A549 (cell line): ENCODE measurements at regions of chr12 and their contacts with region 1.

Region 1: DNA sequence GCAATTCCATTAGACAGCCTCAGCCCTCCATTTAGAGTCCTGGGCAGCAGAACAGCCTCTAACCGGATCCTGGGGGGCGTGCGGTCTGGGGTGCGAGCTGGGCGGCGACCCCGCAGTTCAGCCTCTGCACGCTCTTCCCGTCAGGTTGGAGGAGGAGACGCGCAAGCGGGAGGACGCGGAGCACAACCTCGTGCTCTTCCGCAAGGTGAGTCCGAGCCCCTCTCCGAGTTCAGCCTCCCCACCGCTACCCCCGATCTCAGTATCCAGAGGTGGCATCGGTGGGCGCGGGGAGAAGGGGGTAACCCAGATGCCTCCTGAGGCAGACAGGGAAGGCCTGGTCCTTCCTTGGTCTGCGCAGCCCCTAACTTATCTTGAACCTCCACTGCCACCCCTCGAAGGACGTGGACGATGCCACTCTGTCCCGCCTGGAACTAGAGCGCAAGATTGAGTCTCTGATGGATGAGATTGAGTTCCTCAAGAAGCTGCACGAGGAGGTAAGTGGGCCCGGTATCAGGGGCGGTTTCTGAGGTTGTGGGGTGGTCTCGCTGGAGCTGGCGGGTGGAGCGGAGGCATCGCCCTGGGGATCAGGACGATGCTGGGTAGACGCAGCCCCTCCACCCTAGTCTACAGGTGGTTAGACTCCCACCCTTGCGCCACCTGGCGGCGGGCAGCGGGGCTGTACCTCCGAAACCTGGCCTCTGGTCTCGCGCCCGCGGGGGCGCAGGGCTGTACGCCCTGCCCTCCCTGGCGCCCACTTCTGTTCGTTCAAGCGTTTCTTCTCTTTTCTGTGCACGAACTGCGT is 1.3 kb downstream of the PRPH start:
- DNase-seq: peak; percentile 69 to 88
- ATAC-seq: peak; percentile 60 to 83
- H3K4me3 ChIP-seq: peak overlapping the region; percentile 52
- H3K27ac ChIP-seq: peak overlapping the region; percentile 50 to 80; a peak in 5 of 6 replicates
- H3K4me1 ChIP-seq: peaks cover 18% of the 10 kb centered on the region; the same call in 2 of the 3 replicates
- CTCF ChIP-seq: peak; percentile 81
- EP300 ChIP-seq: no peak
- POLR2A ChIP-seq: no peak
- RAD21 ChIP-seq: peak in 1 of 2 experiments; percentile 34; a peak in 2 of 5 replicates

Region 2: DNA sequence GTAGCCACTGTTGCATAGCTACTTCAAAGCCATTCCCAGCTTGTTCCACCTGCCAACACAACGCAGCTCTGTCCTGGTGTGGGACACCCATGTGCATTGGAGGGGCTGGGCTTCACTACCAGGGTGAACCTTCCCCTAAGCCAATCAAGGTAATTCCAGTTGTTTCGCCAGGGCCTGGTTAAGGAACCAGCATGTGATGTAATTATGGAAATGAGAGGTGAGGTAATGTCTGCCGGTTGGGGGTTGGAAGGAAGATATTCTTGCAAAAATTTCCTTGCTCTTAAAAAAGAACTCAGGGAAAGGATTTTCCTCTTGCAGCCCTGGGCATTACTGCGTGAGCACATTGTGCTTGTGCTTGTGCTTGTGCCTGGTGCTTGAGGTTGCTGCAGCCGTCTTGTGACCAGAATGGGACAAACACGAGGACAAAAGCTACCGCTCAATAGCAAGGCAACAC is 16.5 kb before region 1 on chr12:
- CTCF ChIA-PET with region 1: interaction called, 120 read pairs
- POLR2A ChIA-PET with region 1: no interaction called
- DNase-seq: no peak
- ATAC-seq: no peak
- H3K4me3 ChIP-seq: no peak overlapping the region
- H3K27ac ChIP-seq: no peak overlapping the region
- H3K4me1 ChIP-seq: 0 out of 3 replicates have a peak, but pooled peaks cover 9% of the 10 kb centered on the region
- CTCF ChIP-seq: no peak
- EP300 ChIP-seq: no peak
- POLR2A ChIP-seq: no peak
- RAD21 ChIP-seq: no peak

Region 3: GRCh38 chr12:49309391-49309790 is 13.2 kb after region 1 on chr12:
- CTCF ChIA-PET with region 1: interaction called, 21 read pairs
- POLR2A ChIA-PET with region 1: no interaction called
- DNase-seq: peak in 1 of 2 experiments; percentile 25
- ATAC-seq: peak in 1 of 2 experiments; percentile 59; a peak in 3 of 6 replicates
- H3K4me3 ChIP-seq: no peak overlapping the region
- H3K27ac ChIP-seq: no peak overlapping the region
- H3K4me1 ChIP-seq: 0 out of 3 replicates have a peak, but pooled peaks cover 3% of the 10 kb centered on the region
- CTCF ChIP-seq: no peak
- EP300 ChIP-seq: no peak
- POLR2A ChIP-seq: no peak
- RAD21 ChIP-seq: no peak

Region 4: DNA sequence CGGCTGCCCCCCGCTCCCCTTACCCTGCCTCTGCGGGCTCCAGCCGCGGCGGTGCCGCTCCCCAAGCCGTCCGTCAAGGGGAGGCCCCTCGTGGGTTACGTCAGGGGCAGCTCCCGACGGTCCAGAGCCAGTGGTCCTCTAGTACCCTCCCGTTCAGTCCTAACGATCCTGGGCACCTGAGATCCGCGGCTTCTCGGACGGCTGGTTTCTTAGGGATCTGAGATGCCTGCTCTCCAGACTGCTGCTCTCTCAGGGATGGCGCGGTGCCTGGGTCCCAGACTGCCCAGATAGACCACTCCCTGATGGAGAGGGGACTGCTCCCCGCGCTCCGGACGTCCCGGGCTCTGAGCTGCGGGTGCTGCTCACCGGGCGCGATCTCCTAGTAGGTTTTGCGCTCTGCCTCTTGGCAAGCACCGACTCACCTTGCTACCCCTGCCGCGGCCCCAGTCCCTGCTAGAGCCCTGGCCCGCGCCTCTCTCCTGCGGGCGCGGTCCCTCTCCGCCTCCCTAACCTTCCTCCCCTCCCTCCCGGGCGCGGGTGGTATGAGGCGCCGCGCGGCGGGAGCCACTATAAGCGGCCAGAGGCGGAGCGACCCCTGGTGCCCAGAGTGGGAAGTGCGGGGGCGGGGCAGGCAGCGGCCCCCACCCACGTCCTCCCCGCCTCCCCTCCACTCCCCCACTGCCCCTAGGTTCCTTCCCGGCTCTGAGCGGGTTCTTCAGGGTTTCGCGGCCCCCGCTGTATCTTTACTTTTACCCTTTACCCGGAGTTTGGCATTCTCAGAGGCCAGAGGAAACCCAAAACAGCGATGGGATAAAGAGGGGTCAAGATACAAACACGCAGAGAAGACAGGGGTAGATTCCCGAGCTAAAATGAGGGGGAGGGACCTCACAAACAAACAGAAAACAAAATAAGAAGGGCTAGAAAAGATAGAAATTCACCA is 40.7 kb after region 1 on chr12 and contains the start of gene C1QL4:
- CTCF ChIA-PET with region 1: interaction called, 164 read pairs
- POLR2A ChIA-PET with region 1: no interaction called
- DNase-seq: peak; percentile 75 to 84
- ATAC-seq: peak; percentile 78 to 88
- H3K4me3 ChIP-seq: peak within 1 kb of the TSS; percentile 64
- H3K27ac ChIP-seq: peak within 1 kb of the TSS; percentile 71 to 82
- H3K4me1 ChIP-seq: peaks cover 12% of the 10 kb centered on the region; the same call in 2 of the 3 replicates
- CTCF ChIP-seq: peak; percentile 95
- EP300 ChIP-seq: no peak
- POLR2A ChIP-seq: peak; percentile 62
- RAD21 ChIP-seq: peak; percentile 28 to 53
- polyA plus RNA-seq, gene C1QL4: 0.99 and 1.5 TPM in 2 replicates

Region 5: DNA sequence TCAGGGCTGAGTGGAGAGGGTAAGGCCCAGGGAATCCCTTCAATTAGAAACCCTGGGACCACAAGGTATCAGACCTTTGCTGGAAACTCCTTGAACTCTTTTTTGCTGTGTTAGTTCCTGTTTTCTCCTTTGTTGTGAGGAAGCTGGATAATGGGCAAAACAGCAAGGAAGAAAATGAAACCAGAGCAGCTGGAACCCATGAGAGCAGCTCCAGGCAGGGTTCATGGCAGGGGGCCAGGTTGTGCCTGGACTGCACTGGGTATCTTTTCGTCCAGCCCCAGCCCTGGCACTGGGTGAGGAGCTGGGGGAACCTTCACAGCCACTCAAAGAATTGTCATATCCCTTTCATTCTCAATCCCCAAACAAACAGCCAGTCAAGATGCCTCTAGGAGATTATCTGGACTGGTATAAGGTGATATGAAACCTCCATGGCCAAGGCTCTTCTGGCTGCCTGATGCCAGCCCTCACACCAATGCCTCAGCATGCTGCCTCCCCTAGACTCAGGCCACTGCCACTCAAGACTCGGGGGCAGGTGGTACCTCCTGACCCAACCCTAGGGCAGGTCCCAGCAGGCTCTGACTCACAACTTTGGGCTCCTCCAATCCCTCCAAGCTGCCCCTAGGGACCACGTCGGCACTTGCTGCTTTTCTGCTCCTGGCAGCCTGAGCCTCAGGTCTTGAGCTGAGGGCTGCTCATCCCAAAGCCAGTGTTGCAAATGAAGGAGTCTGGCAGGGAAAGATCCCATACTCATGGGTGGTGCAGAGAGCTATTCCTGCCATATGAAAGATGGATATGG is 292.7 kb after region 1 on chr12:
- CTCF ChIA-PET with region 1: no interaction called
- POLR2A ChIA-PET with region 1: no interaction called
- DNase-seq: no peak
- ATAC-seq: peak in 1 of 2 experiments; percentile 24; a peak in 1 of 6 replicates
- H3K4me3 ChIP-seq: no peak overlapping the region
- H3K27ac ChIP-seq: no peak overlapping the region
- H3K4me1 ChIP-seq: no peaks in the 10 kb centered on the region
- CTCF ChIP-seq: no peak
- EP300 ChIP-seq: no peak
- POLR2A ChIP-seq: no peak
- RAD21 ChIP-seq: no peak